Aorta (tissue), 5 donors: ENCODE measurements at regions of chr22 and their contacts with region 1.

Region 1: GRCh38 chr22:39532215-39533071 is at the start of gene RPS19BP1:
- DNase-seq: peak; percentile 99 to 100
- ATAC-seq: peak; percentile 93
- H3K4me3 ChIP-seq: peak within 1 kb of the TSS; percentile 64 to 83
- H3K27ac ChIP-seq: peak within 1 kb of the TSS in 1 of 2 donors; percentile 61
- H3K4me1 ChIP-seq: no peaks in the 10 kb centered on the region
- H3K27me3 ChIP-seq: no peaks in the 10 kb centered on the region
- total RNA-seq, gene RPS19BP1: 50.4 to 51.8 TPM

Region 2: DNA sequence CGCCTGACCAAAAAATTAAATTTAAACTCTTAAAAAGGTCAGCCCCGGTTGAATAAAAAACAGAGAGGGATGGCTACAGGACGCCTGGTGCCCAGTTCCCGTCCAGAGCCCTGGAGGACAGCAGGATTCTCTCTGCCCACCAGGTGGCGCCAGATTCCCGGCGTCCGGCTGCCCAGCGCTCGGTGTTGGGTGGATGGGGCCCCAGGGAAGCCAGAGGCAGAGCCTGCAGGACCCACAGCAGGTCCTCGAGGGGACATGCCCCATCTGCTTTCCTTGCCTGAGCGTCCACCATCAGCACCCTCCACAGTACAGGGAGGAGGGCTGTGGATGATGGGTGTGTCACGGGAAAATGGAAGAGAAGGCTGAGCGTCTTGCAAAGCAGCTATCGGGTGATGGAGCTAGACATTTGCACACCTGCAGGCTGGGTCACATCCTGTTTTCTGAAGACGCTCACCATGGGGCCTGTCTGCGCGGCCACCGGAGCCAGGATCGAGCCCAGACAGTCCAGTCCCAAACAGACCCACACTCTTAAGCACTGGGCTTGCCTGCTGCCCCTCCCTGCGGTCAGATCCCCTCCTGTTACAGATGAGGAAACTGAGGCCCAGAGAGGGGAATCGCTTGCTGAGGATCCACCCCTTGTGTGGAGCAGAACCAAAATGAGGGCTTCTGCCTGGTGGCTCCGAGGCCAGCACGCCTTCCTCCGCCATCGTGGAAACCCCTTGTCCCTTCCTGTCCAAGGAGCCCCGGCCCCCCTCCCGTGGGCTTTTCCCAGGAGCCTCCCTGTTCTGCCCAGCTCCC is 361.4 kb before region 1 on chr22:
- intact Hi-C with region 1: loop called (anchors 5 kb)
- DNase-seq: peak; percentile 89 to 96
- ATAC-seq: peak; percentile 88
- H3K4me3 ChIP-seq: no peak overlapping the region
- H3K27ac ChIP-seq: no peak overlapping the region
- H3K4me1 ChIP-seq: peaks cover 0 to 7% of the 10 kb centered on the region in 2 donors
- H3K27me3 ChIP-seq: no peaks in the 10 kb centered on the region

Region 3: DNA sequence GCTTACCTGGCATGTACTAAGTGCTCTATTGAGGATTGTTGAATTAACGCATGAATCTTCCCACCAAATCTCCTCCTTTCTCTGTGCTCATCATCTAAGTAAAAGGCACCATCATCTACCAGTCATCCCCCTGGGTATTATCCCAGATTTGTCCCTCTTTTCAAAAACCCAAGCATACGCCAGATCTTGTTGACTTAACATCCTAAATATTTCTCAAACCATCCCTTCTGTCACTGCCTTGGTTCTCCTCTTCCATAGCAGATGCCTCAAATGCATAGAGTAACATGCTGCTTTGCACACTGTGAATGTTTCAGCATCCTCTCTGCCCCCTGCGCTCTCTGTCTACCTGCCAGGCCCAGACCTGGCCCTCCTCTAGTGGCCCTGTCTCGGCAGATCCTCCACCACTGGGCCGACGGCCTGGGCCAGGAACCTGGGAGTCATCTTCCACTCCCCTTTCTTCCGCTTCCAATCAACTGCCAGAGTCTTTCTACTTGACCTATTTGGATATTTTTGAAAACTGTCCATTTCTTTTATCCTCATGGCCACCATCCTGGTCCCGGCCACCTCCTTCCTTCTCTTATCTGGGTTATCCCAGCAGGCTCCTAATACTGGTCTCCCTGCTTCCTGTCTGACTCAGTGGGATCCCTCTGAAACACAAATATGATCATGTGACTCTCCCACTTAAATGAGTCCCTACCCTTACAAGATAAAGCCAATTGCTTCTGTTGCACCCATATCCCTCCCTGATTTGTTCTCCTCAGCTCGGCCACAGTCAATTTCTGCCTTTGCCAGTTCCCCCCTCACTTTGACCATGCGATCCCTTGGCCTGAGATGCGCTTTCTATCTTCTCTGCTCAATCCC is 136.3 kb before region 1 on chr22:
- intact Hi-C with region 1: loop called in 1 of 2 experiments (anchors 5 kb)
- DNase-seq: peak in 1 of 2 donors; percentile 67
- ATAC-seq: no peak
- H3K4me3 ChIP-seq: no peak overlapping the region
- H3K27ac ChIP-seq: no peak overlapping the region
- H3K4me1 ChIP-seq: no peaks in the 10 kb centered on the region
- H3K27me3 ChIP-seq: no peaks in the 10 kb centered on the region

Region 4: DNA sequence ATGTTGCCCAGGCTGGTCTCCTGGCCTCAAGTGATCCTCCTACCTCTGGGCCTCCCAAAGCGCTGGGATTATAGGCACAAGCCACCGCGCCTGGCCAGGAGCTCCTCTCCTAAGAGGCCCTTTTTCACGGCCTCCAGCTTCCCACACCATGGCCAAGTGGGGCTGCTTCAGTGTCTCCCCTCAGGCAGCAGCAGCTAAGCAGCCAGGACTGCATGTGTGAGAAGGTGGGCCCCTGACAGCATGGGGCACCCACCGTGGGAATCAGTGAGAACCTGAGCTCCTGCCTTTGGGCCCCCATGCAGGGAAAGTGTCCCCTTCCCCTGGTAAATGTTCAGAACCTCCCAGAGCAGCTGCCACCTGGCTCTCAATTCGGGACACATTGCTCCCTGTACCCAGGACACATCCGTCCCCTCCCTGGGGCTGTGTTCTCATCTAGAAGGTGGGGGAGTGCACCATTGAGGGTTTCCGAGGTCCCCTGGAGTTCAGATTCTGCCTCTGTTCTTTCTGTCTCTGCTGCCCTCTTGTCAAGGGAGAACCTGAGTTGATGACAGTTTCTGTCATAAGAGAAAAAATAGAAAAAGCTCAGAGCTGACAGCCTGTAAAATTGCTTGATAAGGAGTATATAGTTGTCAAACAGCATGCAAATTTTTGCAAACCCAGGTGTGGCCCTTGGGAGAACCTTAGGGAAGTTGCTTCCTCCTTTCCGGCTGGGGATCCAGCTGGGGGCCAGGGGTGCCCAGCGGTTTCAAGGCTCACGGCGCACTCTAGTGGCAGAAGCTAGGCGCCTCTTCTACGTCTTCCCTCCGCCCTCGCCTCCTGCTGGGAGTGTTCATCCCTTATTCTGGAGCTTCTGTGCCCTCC is 492.0 kb after region 1 on chr22:
- intact Hi-C with region 1: loop called (anchors 2 to 5 kb)
- DNase-seq: peak; percentile 73 to 86
- ATAC-seq: no peak
- H3K4me3 ChIP-seq: no peak overlapping the region
- H3K27ac ChIP-seq: no peak overlapping the region
- H3K4me1 ChIP-seq: no peaks in the 10 kb centered on the region
- H3K27me3 ChIP-seq: no peaks in the 10 kb centered on the region

Region 5: DNA sequence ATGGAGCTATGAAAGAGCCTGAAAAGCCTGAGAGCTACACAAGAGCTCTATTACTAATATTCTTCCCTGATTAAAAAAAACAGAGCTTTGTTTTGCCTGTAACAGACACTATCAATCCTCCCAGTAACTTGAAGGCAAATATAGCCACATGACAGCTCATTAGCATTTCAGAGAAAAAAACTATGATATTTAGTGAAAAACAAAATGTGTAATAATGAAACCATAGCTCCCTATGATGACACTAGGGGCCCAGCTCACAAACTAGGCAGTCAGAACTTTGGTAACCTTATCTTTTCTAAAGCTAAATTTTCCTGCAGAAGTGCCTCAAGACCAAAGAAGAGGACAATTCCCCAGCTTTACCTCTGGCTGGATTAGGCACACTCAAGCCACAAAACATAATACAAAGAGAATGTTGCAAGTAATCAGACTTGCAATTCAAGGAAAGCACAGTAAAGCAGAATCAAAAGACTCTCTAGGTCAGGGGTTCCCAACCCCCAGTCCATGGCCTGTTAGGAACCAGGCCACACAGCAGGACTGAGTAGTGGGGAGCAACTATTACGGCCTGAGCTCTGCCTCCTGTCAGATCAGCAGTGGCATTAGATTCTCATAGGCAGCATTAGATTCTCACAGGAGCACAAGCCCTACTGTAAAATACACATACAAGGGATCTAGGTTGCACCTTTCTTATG is 1050.8 kb after region 1 on chr22:
- intact Hi-C with region 1: no loop called
- DNase-seq: no peak
- ATAC-seq: no peak
- H3K4me3 ChIP-seq: no peak overlapping the region
- H3K27ac ChIP-seq: no peak overlapping the region
- H3K4me1 ChIP-seq: peaks cover 0 to 2% of the 10 kb centered on the region in 2 donors
- H3K27me3 ChIP-seq: no peaks in the 10 kb centered on the region

Region 6: GRCh38 chr22:40636380-40637182 is 1104.1 kb after region 1 on chr22 and contains the start of gene MRTFA:
- intact Hi-C with region 1: loop called in 1 of 2 experiments (anchors 5 kb)
- DNase-seq: peak; percentile 100
- ATAC-seq: peak; percentile 98
- H3K4me3 ChIP-seq: peak within 1 kb of the TSS; percentile 79 to 86
- H3K27ac ChIP-seq: peak within 1 kb of the TSS; percentile 4 to 60
- H3K4me1 ChIP-seq: no peaks in the 10 kb centered on the region
- H3K27me3 ChIP-seq: no peaks in the 10 kb centered on the region
- total RNA-seq, gene MRTFA: 73.6 to 77.4 TPM